ENCODE measurements at regions of chr10 and their contacts with region 1.

Region 1: GRCh38 chr10:100009793-100010676 is at the start of gene DNMBP:
- DNase-seq: no peak
- H3K4me3 ChIP-seq: peak within 1 kb of the TSS; percentile 74
- H3K27me3 ChIP-seq: no peaks in the 10 kb centered on the region
- CTCF ChIP-seq: no peak; the same call in 1 of the 2 replicates
- polyA plus RNA-seq, gene DNMBP: 16.3 and 16.7 TPM in 2 replicates

Region 2: GRCh38 chr10:99845837-99846382 is 164.1 kb before region 1 on chr10:
- CTCF ChIA-PET with region 1: interaction called, 30 read pairs
- POLR2A ChIA-PET with region 1: no interaction called
- DNase-seq: peak; percentile 67
- H3K4me3 ChIP-seq: 0 out of 2 replicates have a peak overlapping the region, but pooled peaks have one; percentile 0
- H3K27me3 ChIP-seq: no peaks in the 10 kb centered on the region
- CTCF ChIP-seq: peak; percentile 87

Region 3: GRCh38 chr10:99958302-99958701 is 51.7 kb before region 1 on chr10:
- CTCF ChIA-PET with region 1: interaction called, 11 read pairs
- POLR2A ChIA-PET with region 1: no interaction called
- DNase-seq: peak; percentile 42
- H3K4me3 ChIP-seq: no peak overlapping the region
- H3K27me3 ChIP-seq: no peaks in the 10 kb centered on the region
- CTCF ChIP-seq: no peak

Region 4: DNA sequence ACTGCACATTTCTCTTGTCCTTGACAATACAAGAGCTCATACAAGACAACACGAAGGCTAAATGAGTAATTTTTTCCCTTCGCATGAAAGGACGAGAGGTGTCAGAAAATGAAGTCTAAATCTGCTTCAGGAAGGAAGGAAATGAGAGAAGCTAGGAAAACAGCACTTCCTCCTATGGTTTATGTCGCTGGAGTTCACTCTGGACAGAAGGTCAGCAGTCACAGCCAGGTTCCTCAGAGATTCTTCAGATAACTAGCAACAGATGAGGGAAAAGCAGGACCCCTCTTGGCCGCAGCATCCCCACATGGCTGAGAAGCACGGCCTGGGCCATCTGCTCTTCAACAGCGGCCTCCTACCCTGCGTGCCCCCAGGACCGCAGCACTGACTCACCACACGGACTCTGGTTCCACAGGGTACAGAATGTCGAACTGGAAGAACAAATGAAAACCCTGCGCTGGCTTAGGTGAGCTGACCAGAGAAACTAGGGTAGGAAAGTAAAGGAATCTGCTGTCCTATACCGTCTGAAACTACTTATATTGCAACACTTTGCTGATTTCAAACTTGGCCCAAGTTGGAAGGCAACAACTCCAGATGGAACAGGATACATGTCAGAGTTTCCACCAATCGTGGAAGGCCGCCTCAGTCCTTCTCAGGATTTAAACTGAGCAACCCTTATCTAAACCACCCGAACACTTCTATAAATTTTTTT is 26.6 kb before region 1 on chr10:
- CTCF ChIA-PET with region 1: interaction called, 10 read pairs
- POLR2A ChIA-PET with region 1: interaction called, 4 read pairs
- DNase-seq: no peak
- H3K4me3 ChIP-seq: peak overlapping the region; percentile 14
- H3K27me3 ChIP-seq: no peaks in the 10 kb centered on the region
- CTCF ChIP-seq: no peak

Region 5: DNA sequence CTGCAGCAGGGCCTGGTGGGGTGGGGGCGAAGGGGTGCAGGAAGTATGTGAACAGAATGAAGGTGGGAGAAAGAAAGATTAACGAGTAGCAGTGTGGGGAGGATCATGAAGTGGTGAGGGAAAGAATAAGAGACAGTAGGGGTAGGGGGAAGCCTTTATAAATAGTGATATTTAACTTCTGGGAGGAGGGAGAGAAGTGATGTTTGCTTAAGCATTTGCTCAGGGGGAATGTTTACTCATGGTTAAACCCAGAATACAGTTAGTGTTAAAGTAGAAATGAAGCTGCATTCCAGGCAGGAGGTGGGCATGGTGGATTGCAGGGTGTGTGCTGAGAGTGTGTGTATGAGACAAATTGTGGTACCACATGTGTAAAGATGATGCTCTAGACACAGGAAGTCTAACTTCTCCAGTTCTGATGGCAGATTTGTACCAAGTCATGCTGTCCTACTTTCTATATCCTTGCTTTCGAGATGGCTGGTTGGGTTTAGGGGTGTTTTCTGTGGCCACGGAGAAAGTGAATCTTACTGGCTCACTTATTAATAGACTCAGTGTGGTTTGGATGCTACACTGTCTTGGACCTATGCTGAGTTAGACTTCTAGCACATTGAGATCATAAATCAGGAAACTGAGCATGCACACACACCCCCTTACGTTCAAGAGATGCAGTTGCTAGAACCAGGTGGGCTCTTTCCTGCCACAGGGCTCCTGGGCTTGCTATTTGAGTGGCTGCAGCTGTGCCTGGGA is 10.3 kb after region 1 on chr10:
- CTCF ChIA-PET with region 1: interaction called, 25 read pairs
- POLR2A ChIA-PET with region 1: no interaction called
- DNase-seq: no peak
- H3K4me3 ChIP-seq: no peak overlapping the region
- H3K27me3 ChIP-seq: no peaks in the 10 kb centered on the region
- CTCF ChIP-seq: no peak

Region 6: GRCh38 chr10:100046021-100046486 is 36.0 kb after region 1 on chr10:
- CTCF ChIA-PET with region 1: interaction called, 37 read pairs
- POLR2A ChIA-PET with region 1: no interaction called
- DNase-seq: peak; percentile 23
- H3K4me3 ChIP-seq: no peak overlapping the region
- H3K27me3 ChIP-seq: no peaks in the 10 kb centered on the region
- CTCF ChIP-seq: peak; percentile 98

Measured in BJ (cell line).